OCI-LY7 (cell line): ENCODE measurements at regions of chr11 and their contacts with region 1.

Region 1: GRCh38 chr11:48307760-48308386 is 1.9 kb downstream of the OR4S1 start:
- DNase-seq: peak; percentile 70
- H3K4me3 ChIP-seq: no peak overlapping the region
- H3K27ac ChIP-seq: no peak overlapping the region
- H3K4me1 ChIP-seq: no peaks in the 10 kb centered on the region
- CTCF ChIP-seq: peak; percentile 99

Region 2: GRCh38 chr11:47928426-47928825 is 379.4 kb before region 1 on chr11:
- CTCF ChIA-PET with region 1: no interaction called
- POLR2A ChIA-PET with region 1: no interaction called
- intact Hi-C with region 1: no loop called
- DNase-seq: no peak
- H3K4me3 ChIP-seq: no peak overlapping the region
- H3K27ac ChIP-seq: no peak overlapping the region
- H3K4me1 ChIP-seq: peaks cover 16% of the 10 kb centered on the region
- CTCF ChIP-seq: no peak

Region 3: DNA sequence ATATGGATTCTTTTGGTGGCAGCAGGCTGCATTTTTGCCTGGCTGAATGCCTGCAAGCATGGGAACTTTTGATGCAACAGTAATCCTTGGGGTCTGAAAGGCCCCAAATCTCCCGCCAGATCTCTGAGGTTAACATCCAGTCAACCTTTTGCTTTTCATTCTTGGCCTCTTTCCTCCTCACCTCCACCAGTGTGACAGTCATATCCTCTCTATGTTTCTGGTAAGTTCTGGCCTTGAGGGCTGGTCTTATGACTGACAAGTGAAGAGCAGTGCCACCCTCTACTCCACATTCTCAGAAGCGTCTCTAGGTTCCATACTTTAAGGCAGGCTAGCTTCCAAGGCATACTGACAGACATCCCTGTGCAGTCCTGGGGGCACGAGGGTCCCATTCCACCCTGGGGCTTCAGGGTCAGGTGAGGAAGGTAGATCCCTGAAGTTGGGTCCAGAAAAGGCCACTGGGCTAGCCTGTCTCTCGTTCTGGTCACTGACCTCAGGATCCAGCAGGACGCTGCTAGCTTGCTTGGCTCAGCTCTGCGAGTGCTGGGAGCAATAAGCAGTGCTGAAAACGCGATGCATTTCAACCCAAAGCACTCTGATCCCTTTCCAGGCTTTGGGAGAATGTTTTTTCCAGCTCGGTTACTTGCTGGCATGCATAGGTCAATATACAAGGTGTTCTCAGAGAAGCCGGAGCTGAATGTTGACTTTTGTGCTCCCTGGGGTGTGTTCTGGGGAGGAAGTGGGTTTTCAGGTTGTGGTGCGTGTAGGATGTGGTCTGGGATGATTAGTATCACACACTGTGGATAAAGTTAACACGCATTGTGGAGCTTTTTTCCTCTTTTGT is 252.4 kb before region 1 on chr11:
- CTCF ChIA-PET with region 1: no interaction called
- POLR2A ChIA-PET with region 1: no interaction called
- intact Hi-C with region 1: no loop called
- DNase-seq: peak; percentile 71
- H3K4me3 ChIP-seq: peak overlapping the region; percentile 7
- H3K27ac ChIP-seq: no peak overlapping the region
- H3K4me1 ChIP-seq: peaks cover 63% of the 10 kb centered on the region
- CTCF ChIP-seq: no peak

Region 4: DNA sequence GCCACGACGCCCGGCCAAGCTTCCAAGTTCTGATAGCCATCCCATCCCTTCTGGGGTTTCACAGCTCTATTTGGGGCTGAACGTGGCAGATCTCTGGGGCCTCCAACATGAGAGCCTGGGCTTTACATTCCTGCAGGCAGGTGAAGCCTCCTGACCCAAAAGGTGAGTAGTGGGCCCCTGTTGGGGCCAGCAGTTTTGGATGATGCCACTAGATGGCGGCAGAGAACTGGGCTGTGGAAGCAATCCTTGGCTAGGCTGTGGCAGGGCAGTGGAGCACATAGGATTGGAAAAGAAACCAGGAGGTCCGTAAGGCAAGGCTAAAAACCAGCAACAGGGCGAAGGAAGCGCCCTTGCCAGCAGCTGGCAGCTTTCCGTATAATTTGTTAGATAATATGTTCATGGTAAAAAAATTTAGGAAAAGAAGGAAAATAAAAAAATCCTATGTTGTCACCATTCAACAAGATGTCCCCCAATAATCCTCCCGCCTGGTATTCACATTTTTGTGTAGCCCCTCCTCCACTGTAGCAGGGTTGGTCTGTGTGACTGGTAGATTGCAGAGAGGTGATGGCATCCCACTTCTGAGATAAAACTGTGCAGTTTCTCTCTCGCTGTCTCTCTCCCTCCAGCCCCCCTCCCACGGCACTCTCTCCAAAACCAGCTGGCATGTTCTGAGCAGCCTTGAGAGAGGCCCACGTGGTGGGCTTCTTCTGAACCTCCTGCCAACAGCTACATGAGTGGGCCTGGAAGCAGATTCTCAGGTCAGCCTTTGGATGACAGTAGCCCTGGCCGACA is 134.9 kb before region 1 on chr11:
- CTCF ChIA-PET with region 1: no interaction called
- POLR2A ChIA-PET with region 1: no interaction called
- intact Hi-C with region 1: loop called (anchors 10 kb)
- DNase-seq: peak; percentile 60
- H3K4me3 ChIP-seq: no peak overlapping the region
- H3K27ac ChIP-seq: no peak overlapping the region
- H3K4me1 ChIP-seq: peaks cover 12% of the 10 kb centered on the region
- CTCF ChIP-seq: peak; percentile 92

Region 5: DNA sequence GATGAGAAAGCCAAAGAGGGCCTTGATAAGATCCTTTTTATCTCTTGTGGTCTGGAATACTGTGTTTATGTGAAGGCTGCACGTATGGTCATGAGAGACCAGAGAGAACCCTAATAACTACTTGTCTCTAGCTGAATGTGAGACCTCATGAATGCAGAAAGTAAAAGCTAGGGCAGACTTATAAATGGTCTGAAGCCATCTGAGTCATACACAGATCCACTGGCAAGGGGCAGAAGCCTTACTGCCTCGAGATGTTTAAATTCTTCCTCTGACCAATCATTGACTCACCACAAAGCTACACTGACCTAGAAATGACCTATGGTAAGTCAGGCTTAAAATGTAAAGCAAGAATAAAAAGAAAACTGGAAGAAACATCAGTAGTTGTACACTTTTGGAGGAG is 114.0 kb before region 1 on chr11:
- CTCF ChIA-PET with region 1: no interaction called
- POLR2A ChIA-PET with region 1: no interaction called
- intact Hi-C with region 1: no loop called
- DNase-seq: no peak
- H3K4me3 ChIP-seq: no peak overlapping the region
- H3K27ac ChIP-seq: no peak overlapping the region
- H3K4me1 ChIP-seq: no peaks in the 10 kb centered on the region
- CTCF ChIP-seq: no peak

Region 6: DNA sequence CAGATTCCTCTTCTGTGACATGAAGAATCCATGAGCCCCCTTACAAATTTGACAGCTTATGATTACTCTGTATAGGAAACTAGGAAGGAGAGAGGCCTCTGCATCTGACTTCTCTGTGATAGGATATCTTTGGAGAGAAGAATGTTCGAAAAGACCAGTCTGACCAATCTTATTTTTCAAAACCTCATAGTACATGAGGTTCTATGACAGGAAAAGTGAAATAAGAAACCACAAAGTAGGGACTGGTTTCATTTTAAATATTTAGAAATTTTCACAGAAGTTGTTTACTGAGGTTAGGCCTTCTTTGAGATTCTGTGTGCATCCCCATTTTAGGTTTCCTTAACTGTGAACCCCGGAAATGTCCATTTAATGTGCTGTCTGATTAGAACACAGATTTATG is 46.3 kb before region 1 on chr11:
- CTCF ChIA-PET with region 1: no interaction called
- POLR2A ChIA-PET with region 1: no interaction called
- intact Hi-C with region 1: no loop called
- DNase-seq: no peak
- H3K4me3 ChIP-seq: no peak overlapping the region
- H3K27ac ChIP-seq: no peak overlapping the region
- H3K4me1 ChIP-seq: no peaks in the 10 kb centered on the region
- CTCF ChIP-seq: no peak